ENCODE measurements at regions of chr1 and their contacts with region 1.

Region 1: DNA sequence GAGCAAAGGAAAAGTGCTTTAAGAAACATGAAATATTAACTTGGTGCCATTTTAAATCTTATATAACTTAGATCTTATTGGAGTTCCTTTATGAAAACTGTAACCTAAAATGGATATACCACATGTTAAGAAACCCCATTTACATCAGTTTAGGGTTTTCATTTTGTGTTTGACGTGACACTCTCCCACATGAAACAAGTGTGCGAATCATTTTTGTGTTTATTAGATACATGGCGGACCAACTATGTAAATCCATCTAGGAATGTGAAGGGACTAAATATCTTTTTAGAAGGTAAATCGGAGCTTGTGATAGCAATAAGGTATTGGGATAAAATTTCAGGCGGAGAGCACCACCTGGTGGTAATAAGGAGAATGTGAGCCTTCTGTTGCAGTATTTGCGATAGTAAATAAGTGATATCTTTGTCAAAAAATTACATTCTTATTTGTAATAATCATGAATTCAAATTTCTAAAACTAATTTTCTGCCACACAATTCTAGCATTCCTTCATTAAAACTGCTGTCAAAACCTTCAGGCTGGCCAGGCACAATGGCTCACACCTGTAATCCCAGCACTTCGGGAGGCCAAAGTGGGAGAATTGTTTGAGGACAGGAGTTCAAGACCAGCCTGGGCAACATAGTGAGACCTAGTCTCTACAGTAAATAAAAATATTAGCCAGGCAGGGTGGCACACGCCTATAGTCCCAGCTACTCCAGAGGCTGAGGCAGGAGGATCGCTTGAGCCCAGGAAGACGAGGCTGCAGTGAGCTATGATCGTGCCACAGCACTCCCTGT is 31.3 kb downstream of the SMAP2 start:
- DNase-seq: peak; percentile 61
- ATAC-seq: peak; percentile 34
- H3K4me3 Mint-ChIP-seq: peak overlapping the region; percentile 3
- H3K27ac Mint-ChIP-seq: peak overlapping the region; percentile 91
- H3K4me1 Mint-ChIP-seq: peaks cover 64% of the 10 kb centered on the region
- H3K27me3 Mint-ChIP-seq: no peaks in the 10 kb centered on the region

Region 2: GRCh38 chr1:40241362-40241761 is 163.5 kb before region 1 on chr1:
- CTCF ChIA-PET with region 1: interaction called, 4 read pairs
- POLR2A ChIA-PET with region 1: no interaction called
- intact Hi-C with region 1: loop called in 1 of 2 experiments (anchors 1 kb)
- DNase-seq: no peak
- ATAC-seq: peak; percentile 62
- H3K4me3 Mint-ChIP-seq: peak overlapping the region; percentile 6
- H3K27ac Mint-ChIP-seq: peak overlapping the region; percentile 81
- H3K4me1 Mint-ChIP-seq: peaks cover 52% of the 10 kb centered on the region
- H3K27me3 Mint-ChIP-seq: peaks cover 3% of the 10 kb centered on the region

Region 3: GRCh38 chr1:40338745-40339424 is 66.0 kb before region 1 on chr1:
- CTCF ChIA-PET with region 1: interaction called, 151 read pairs
- POLR2A ChIA-PET with region 1: no interaction called
- intact Hi-C with region 1: loop called (anchors 1 kb)
- DNase-seq: peak; percentile 94
- ATAC-seq: peak; percentile 85
- H3K4me3 Mint-ChIP-seq: peak overlapping the region; percentile 14
- H3K27ac Mint-ChIP-seq: peak overlapping the region; percentile 69
- H3K4me1 Mint-ChIP-seq: peaks cover 42% of the 10 kb centered on the region
- H3K27me3 Mint-ChIP-seq: no peaks in the 10 kb centered on the region

Region 4: DNA sequence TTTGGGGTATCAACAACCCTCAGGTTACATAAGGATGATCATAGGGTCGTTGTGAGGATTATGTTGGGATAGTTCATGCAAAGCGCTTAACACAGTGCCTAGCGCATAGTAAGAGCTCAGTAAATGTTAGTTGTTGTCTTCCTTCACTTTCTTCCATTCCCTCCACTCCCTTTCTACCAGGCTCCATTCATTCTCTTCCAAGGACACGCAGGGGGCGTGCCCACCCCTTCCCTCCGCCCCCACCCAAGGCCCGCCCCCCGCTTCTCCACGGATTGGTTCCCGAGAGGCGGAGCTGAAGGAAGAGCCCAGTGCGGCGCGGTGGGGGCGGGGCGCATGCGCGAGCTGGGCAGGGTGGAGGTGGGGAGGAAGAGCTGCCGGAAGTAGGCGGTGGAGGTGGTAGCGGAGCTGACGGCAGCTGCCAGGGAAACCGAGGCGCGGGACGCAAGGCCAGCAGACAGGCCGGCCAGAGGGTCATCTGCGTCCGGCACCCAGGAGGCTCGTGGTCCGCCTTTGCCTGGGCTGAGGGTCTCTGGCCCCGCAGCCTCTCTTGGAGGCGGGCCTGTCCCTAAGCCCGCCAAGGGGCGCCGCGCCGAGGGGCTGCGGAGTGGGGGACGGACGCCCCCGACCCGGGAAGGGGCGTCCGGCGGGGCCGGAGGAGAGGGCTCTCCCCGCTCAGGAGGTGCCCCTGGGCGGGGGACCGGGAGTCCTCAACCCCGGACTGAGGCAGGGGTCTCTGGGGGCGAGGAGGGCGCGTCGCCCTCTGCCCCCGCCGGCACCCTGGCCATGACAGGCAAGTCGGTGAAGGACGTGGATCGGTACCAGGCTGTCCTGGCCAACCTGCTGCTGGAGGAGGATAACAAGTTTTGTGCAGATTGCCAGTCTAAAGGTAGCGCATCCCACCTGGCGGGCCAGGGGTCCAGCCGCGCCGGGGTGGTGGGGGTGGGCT is 31.3 kb before region 1 on chr1 and contains the start of gene SMAP2:
- CTCF ChIA-PET with region 1: interaction called, 14 read pairs
- POLR2A ChIA-PET with region 1: interaction called, 9 read pairs
- intact Hi-C with region 1: loop called (anchors 5 kb)
- DNase-seq: peak; percentile 98
- ATAC-seq: peak; percentile 85
- H3K4me3 Mint-ChIP-seq: peak within 1 kb of the TSS; percentile 100
- H3K27ac Mint-ChIP-seq: peak within 1 kb of the TSS; percentile 99
- H3K4me1 Mint-ChIP-seq: peaks cover 44% of the 10 kb centered on the region
- H3K27me3 Mint-ChIP-seq: no peaks in the 10 kb centered on the region
- total RNA-seq, gene SMAP2: 241 to 258 TPM

Region 5: GRCh38 chr1:40449684-40450494 is 45.0 kb after region 1 on chr1 and contains the start of gene ZFP69B:
- CTCF ChIA-PET with region 1: interaction called, 4 read pairs
- POLR2A ChIA-PET with region 1: no interaction called
- intact Hi-C with region 1: loop called in 1 of 2 experiments (anchors 1 kb)
- DNase-seq: peak; percentile 96
- ATAC-seq: peak; percentile 67
- H3K4me3 Mint-ChIP-seq: peak within 1 kb of the TSS; percentile 71
- H3K27ac Mint-ChIP-seq: peak within 1 kb of the TSS; percentile 97
- H3K4me1 Mint-ChIP-seq: peaks cover 30% of the 10 kb centered on the region
- H3K27me3 Mint-ChIP-seq: no peaks in the 10 kb centered on the region
- total RNA-seq, gene ZFP69B: 4.6 to 5.3 TPM

Measured in activated CD4-positive, alpha-beta T cell treated with anti-CD3 and anti-CD28 coated beads for 36 hours (primary cell).